Head of caudate nucleus (tissue), 42 donors: ENCODE measurements at regions of chr20 and their contacts with region 1.

Region 1: GRCh38 chr20:24095756-24096155 is 107.2 kb upstream of the GGTLC1 start:
- DNase-seq: no peak

Region 2: GRCh38 chr20:24136659-24137246 is 41.0 kb after region 1 on chr20:
- intact Hi-C with region 1: loop called (anchors 2 kb)
- DNase-seq: no peak